Activated CD4-positive, alpha-beta T cell treated with anti-CD3 and anti-CD28 coated beads for 36 hours (primary cell): ENCODE measurements at regions of chr1 and their contacts with region 1.

Region 1: GRCh38 chr1:7752512-7753417 is 18.3 kb upstream of the VAMP3 start:
- DNase-seq: peak; percentile 69
- ATAC-seq: peak; percentile 63
- H3K4me3 Mint-ChIP-seq: peak overlapping the region; percentile 27
- H3K27ac Mint-ChIP-seq: no peak overlapping the region
- H3K4me1 Mint-ChIP-seq: peaks cover 20% of the 10 kb centered on the region
- H3K27me3 Mint-ChIP-seq: peaks cover 8% of the 10 kb centered on the region

Region 2: DNA sequence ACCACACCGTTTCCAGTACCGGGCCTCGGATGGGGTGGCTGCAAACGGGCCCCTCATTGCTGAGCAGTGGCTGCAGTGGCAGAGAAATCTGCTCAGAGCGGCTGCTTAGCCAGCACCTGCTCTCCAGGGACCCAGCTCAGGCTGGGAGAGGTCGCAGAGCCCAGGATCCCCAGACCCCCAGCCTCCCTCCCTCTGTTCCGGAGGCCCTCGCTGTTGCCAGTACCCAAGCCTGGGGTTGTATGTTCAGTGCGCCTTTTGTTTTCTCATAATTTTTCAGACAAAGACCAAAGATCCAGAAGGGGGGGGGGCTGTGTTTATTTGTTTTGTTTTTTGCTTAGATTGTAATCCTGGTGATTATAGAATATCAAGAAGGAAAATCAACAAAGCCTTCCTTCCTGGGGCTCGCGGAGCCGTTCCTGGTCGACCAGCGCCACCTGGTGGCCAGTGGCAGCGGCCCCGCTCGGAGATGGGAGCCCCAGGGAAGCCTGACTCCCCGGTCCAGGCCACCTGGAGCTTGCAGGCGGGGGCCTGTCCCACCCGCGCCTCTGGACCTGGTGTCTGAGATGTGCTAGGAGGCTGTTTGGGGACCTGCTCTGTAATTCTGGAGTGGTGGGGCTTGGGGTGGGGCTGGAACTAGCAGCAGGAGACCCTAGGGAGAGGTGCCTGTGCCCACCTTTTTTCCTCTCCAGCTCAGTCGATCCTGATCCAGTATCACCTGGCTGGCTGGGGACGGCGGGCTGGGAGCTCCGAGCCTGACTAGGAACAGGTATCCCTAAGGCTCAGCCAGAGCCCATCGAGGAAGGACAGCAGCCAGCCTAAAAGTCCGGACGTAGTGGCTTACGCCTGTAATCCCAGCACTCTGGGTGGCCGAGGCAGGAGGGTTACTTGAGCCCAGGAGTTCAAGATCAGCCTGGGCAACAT is 105.5 kb before region 1 on chr1:
- CTCF ChIA-PET with region 1: interaction called, 11 read pairs
- POLR2A ChIA-PET with region 1: no interaction called
- intact Hi-C with region 1: no loop called
- DNase-seq: peak; percentile 85
- ATAC-seq: no peak
- H3K4me3 Mint-ChIP-seq: no peak overlapping the region
- H3K27ac Mint-ChIP-seq: no peak overlapping the region
- H3K4me1 Mint-ChIP-seq: no peaks in the 10 kb centered on the region
- H3K27me3 Mint-ChIP-seq: no peaks in the 10 kb centered on the region

Region 3: DNA sequence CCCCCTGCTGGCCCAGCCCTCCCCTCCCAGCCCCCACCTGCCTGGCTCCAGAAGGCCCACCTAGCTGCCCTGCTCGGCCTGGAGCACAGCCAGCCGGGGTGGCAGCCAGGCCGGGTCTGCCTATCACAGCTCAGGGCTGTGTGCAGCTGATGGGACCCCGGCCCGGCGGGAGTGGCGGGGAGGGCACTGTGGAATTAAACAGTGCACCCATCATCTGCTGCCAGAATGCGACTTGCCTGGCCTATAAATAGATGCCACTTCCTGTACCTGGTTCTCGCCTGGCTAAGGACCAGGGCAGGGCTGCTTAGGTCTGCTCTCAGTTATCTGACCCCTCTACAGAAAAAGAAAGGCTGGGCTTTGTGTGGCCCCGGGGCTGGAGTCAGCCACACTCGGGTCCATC is 79.9 kb before region 1 on chr1:
- CTCF ChIA-PET with region 1: interaction called, 334 read pairs
- POLR2A ChIA-PET with region 1: no interaction called
- intact Hi-C with region 1: no loop called
- DNase-seq: no peak
- ATAC-seq: no peak
- H3K4me3 Mint-ChIP-seq: no peak overlapping the region
- H3K27ac Mint-ChIP-seq: no peak overlapping the region
- H3K4me1 Mint-ChIP-seq: no peaks in the 10 kb centered on the region
- H3K27me3 Mint-ChIP-seq: peaks cover 3% of the 10 kb centered on the region

Region 4: GRCh38 chr1:7704214-7705047 is 48.3 kb before region 1 on chr1:
- CTCF ChIA-PET with region 1: interaction called, 8 read pairs
- POLR2A ChIA-PET with region 1: no interaction called
- intact Hi-C with region 1: loop called in 1 of 2 experiments (anchors 2 kb)
- DNase-seq: peak; percentile 95
- ATAC-seq: peak; percentile 98
- H3K4me3 Mint-ChIP-seq: peak overlapping the region; percentile 61
- H3K27ac Mint-ChIP-seq: no peak overlapping the region
- H3K4me1 Mint-ChIP-seq: peaks cover 18% of the 10 kb centered on the region
- H3K27me3 Mint-ChIP-seq: peaks cover 44% of the 10 kb centered on the region

Region 5: DNA sequence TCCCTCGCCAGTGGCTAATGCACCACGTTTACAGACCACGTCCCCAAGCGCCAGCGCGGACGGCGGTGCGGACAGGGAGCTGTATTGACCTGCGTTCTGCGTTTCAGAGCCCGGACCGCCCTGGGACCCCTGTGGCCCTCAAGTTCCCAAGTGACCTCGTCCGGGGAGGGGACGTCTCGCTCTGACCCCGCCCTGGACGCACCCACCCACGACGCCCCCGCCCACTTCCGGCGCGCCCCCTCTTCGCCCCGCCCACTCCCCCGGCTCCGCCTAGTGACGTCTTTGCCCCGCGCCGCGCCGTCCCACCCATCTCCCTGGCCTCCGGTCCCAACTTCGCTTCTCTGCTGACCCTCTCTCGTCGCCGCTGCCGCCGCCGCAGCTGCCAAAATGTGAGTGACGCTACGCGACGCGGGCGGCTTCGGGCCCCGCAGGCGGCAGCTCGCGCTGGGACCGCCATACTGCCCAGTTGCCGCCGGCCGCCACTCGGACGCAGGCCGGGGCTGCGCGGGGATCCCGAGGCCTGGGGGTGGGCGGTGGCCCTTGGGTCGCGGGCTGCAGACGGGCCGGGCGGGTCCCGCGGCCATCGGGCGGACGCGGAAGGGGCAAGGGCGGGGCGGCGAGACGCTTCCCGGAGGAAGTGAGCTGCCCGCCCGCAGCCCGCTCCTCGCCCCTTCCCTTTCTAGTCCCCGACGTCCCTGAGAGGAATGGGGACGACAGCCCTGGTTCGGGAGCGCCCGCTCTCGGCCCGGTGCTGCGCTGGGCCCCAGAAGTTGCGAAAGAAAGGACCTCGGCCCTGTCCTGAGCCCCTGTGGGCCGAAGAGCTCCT is 18.4 kb after region 1 on chr1 and contains the start of gene VAMP3:
- CTCF ChIA-PET with region 1: interaction called, 28 read pairs
- POLR2A ChIA-PET with region 1: no interaction called
- intact Hi-C with region 1: no loop called
- DNase-seq: peak; percentile 94
- ATAC-seq: peak; percentile 90
- H3K4me3 Mint-ChIP-seq: peak within 1 kb of the TSS; percentile 80
- H3K27ac Mint-ChIP-seq: peak within 1 kb of the TSS; percentile 72
- H3K4me1 Mint-ChIP-seq: peaks cover 21% of the 10 kb centered on the region
- H3K27me3 Mint-ChIP-seq: peaks cover 6% of the 10 kb centered on the region
- total RNA-seq, gene VAMP3: 16.8 to 17.4 TPM